ENCODE measurements at regions of chr11 and their contacts with region 1.

Region 1: GRCh38 chr11:9460322-9461067 is at the start of gene ZNF143:
- DNase-seq: peak; percentile 100
- ATAC-seq: peak; percentile 85 to 95 (median 86)
- H3K4me3 ChIP-seq: peak within 1 kb of the TSS; percentile 75
- H3K4me3 Mint-ChIP-seq: peak within 1 kb of the TSS; percentile 99
- H3K27ac ChIP-seq: peak within 1 kb of the TSS; percentile 98
- H3K27ac Mint-ChIP-seq: peak within 1 kb of the TSS; percentile 98 to 99
- H3K4me1 ChIP-seq: peaks cover 14% of the 10 kb centered on the region
- H3K4me1 Mint-ChIP-seq: peaks cover 35 to 37% of the 10 kb centered on the region in 2 donors
- H3K27me3 ChIP-seq: no peaks in the 10 kb centered on the region
- H3K27me3 Mint-ChIP-seq: no peaks in the 10 kb centered on the region
- CTCF ChIP-seq: no peak
- total RNA-seq, gene ZNF143: 27.4 to 32.7 (median 32.6) TPM

Region 2: GRCh38 chr11:9314291-9315036 is 146.0 kb before region 1 on chr11 and contains the start of gene TMEM41B:
- intact Hi-C with region 1: loop called (anchors 1 kb)
- DNase-seq: peak; percentile 98 to 99
- ATAC-seq: peak; percentile 90 to 99 (median 95)
- H3K4me3 ChIP-seq: peak within 1 kb of the TSS; percentile 97
- H3K4me3 Mint-ChIP-seq: peak within 1 kb of the TSS; percentile 99
- H3K27ac ChIP-seq: peak within 1 kb of the TSS; percentile 94
- H3K27ac Mint-ChIP-seq: peak within 1 kb of the TSS; percentile 94 to 100
- H3K4me1 ChIP-seq: peaks cover 17% of the 10 kb centered on the region
- H3K4me1 Mint-ChIP-seq: peaks cover 35% of the 10 kb centered on the region in 2 donors
- H3K27me3 ChIP-seq: no peaks in the 10 kb centered on the region
- H3K27me3 Mint-ChIP-seq: peaks cover 13 to 19% of the 10 kb centered on the region in 2 donors
- CTCF ChIP-seq: no peak
- total RNA-seq, gene TMEM41B: 28.1 to 37.0 (median 34.0) TPM

Region 3: DNA sequence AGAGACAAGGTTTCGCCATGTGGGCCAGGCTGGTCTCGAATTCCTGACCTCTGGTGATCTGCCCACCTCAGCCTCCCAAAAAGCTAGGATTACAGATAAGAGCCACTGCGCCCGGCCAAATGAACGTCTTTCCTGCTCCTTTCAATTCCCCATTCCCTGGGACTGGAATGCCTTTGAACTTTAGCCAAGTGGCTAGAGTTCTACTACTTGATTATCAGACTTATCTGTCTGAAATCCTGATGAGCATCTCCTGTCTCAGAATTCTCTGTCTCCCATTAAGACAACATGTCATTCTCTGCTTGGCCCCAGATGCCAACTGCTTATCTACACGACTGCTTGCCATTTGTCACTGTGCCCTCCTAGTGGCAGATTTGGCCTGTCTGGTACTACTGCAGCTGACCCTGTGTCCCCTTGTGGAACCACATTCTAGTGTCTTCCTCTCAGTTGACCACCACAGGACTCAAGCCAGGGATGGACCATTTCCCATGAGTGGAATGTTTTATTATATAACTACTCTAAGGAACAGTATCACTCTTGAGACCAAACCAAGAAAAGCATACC is 109.1 kb before region 1 on chr11:
- intact Hi-C with region 1: no loop called
- DNase-seq: no peak
- ATAC-seq: no peak
- H3K4me3 ChIP-seq: no peak overlapping the region
- H3K4me3 Mint-ChIP-seq: no peak overlapping the region
- H3K27ac ChIP-seq: no peak overlapping the region
- H3K27ac Mint-ChIP-seq: no peak overlapping the region
- H3K4me1 ChIP-seq: no peaks in the 10 kb centered on the region
- H3K4me1 Mint-ChIP-seq: peaks cover 13 to 18% of the 10 kb centered on the region in 2 donors
- H3K27me3 ChIP-seq: no peaks in the 10 kb centered on the region
- H3K27me3 Mint-ChIP-seq: peaks cover 14 to 21% of the 10 kb centered on the region in 2 donors
- CTCF ChIP-seq: no peak

Region 4: DNA sequence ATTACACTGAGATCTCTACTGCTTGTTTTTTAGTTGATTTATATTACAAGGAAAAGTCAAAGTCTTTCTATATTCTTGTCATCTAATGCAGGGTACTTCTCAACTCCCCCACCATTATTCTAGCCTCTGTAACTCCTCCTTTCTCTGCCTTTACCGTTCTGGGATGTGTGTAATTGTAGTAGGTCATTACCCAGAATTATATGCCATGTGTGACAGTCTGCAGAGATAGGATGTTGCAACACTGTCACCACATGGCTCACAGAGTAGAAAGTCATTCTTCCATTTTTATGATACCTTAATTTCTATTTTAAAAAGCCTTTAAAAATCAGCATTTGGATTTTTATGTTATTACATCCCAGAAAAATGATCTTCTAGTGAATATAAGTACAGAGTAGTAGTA is 33.0 kb after region 1 on chr11:
- intact Hi-C with region 1: no loop called
- DNase-seq: no peak
- ATAC-seq: no peak
- H3K4me3 ChIP-seq: no peak overlapping the region
- H3K4me3 Mint-ChIP-seq: no peak overlapping the region
- H3K27ac ChIP-seq: no peak overlapping the region
- H3K27ac Mint-ChIP-seq: no peak overlapping the region
- H3K4me1 ChIP-seq: peaks cover 5% of the 10 kb centered on the region
- H3K4me1 Mint-ChIP-seq: peaks cover 12 to 17% of the 10 kb centered on the region in 2 donors
- H3K27me3 ChIP-seq: no peaks in the 10 kb centered on the region
- H3K27me3 Mint-ChIP-seq: no peaks in the 10 kb centered on the region
- CTCF ChIP-seq: no peak

Region 5: DNA sequence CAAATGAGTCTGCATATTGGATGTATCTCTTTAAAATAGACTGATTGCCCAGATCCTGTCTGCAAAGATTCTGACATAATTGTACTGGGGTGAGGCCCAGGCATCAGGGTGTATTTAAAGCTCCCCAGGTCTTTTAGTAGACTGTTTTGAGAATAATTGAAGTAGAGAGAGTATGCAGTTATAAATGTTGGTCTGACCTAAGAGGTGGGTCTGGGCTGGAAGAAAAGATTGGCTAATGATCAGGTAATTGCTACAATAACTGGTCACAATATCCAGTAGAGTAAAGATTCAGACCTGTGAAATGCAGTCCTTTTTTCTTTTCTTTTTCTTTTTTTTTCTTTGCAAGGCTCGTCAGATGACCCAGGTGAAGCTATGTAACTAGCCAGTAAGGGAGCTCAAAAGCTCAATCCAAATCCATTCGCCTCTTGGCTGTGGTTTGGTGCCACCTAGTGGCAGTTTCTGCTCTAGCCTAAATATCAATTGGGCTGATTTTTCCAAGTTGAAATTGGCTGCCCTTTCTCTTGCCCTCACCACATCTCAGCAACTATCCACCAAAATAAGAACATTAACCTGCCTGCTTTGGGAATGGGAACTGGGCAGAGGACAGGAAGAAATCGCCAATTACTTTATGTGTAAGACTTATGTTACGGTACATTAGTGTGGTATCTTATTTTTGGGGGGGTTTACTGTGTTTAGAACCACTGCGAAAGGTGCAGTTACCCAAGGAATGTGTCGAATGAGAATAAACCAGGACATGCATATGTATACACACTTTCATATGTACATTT is 46.2 kb after region 1 on chr11:
- intact Hi-C with region 1: loop called (anchors 5 kb)
- DNase-seq: peak; percentile 62 to 87
- ATAC-seq: peak; percentile 62 to 75 (median 73)
- H3K4me3 ChIP-seq: no peak overlapping the region
- H3K4me3 Mint-ChIP-seq: no peak overlapping the region
- H3K27ac ChIP-seq: no peak overlapping the region
- H3K27ac Mint-ChIP-seq: no peak overlapping the region
- H3K4me1 ChIP-seq: peaks cover 7% of the 10 kb centered on the region
- H3K4me1 Mint-ChIP-seq: peaks cover 18 to 22% of the 10 kb centered on the region in 2 donors
- H3K27me3 ChIP-seq: no peaks in the 10 kb centered on the region
- H3K27me3 Mint-ChIP-seq: no peaks in the 10 kb centered on the region
- CTCF ChIP-seq: peak; percentile 93

Region 6: GRCh38 chr11:9594267-9595046 is 134.0 kb after region 1 on chr11:
- intact Hi-C with region 1: no loop called
- DNase-seq: no peak
- ATAC-seq: no peak
- H3K4me3 ChIP-seq: no peak overlapping the region
- H3K4me3 Mint-ChIP-seq: no peak overlapping the region
- H3K27ac ChIP-seq: no peak overlapping the region
- H3K27ac Mint-ChIP-seq: no peak overlapping the region
- H3K4me1 ChIP-seq: no peaks in the 10 kb centered on the region
- H3K4me1 Mint-ChIP-seq: no peaks in the 10 kb centered on the region
- H3K27me3 ChIP-seq: no peaks in the 10 kb centered on the region
- H3K27me3 Mint-ChIP-seq: no peaks in the 10 kb centered on the region
- CTCF ChIP-seq: no peak

Region 7: DNA sequence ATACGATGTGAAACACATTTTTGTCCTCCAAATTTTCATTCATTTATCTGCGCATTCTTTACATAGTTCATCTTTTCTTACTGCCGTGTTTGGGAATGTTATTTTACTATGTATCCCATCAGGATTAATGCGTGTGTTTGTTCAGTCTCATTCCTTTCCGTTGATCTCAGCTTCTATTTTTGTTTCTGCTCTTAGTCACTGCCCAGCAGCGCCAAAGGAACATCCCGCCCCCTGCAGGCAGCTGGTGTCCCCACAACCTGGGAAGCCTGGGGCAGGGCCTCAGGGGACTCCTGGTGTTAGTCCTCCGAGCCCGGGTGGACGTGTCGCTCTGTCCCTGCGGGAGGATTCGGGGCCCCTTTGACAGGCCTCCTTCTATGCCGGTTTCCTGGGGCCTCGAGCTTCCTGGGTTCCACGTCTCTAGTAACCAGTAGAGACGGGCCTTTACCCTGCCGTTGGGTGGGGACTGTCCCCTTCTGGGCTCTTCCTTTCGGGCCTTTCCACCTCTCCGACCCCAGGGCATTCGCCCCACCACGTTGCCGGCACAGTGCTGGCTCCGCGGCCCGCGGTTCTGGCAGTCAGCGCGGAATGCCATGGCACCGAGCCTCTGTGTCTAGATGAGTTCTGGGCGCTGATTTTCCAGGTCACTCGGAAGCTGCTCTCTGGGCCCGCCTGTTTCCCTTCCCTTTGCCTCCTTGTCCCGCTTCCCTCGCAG is 152.8 kb after region 1 on chr11:
- intact Hi-C with region 1: loop called (anchors 5 kb)
- DNase-seq: peak; percentile 85 to 90
- ATAC-seq: peak; percentile 59 to 74 (median 68)
- H3K4me3 ChIP-seq: peak overlapping the region; percentile 51
- H3K4me3 Mint-ChIP-seq: peak overlapping the region; percentile 95
- H3K27ac ChIP-seq: peak overlapping the region; percentile 94
- H3K27ac Mint-ChIP-seq: peak overlapping the region; percentile 76 to 93
- H3K4me1 ChIP-seq: peaks cover 19% of the 10 kb centered on the region
- H3K4me1 Mint-ChIP-seq: peaks cover 20 to 22% of the 10 kb centered on the region in 2 donors
- H3K27me3 ChIP-seq: no peaks in the 10 kb centered on the region
- H3K27me3 Mint-ChIP-seq: peaks cover 0 to 6% of the 10 kb centered on the region in 2 donors
- CTCF ChIP-seq: peak; percentile 87

Measured in natural killer cell (primary cell).